Activated naive CD4-positive, alpha-beta T cell treated with anti-CD3 and anti-CD28 coated beads for 36 hours (primary cell): ENCODE measurements at regions of chr10 and their contacts with region 1.

Region 1: GRCh38 chr10:129030996-129031843 is 435.8 kb upstream of the MGMT start:
- DNase-seq: peak; percentile 69
- H3K4me3 Mint-ChIP-seq: peak overlapping the region; percentile 36
- H3K27ac Mint-ChIP-seq: no peak overlapping the region
- H3K4me1 Mint-ChIP-seq: peaks cover 35% of the 10 kb centered on the region
- H3K27me3 Mint-ChIP-seq: peaks cover 2% of the 10 kb centered on the region

Region 2: GRCh38 chr10:128624656-128625530 is 406.3 kb before region 1 on chr10:
- CTCF ChIA-PET with region 1: no interaction called
- intact Hi-C with region 1: no loop called
- DNase-seq: no peak
- H3K4me3 Mint-ChIP-seq: no peak overlapping the region
- H3K27ac Mint-ChIP-seq: no peak overlapping the region
- H3K4me1 Mint-ChIP-seq: no peaks in the 10 kb centered on the region
- H3K27me3 Mint-ChIP-seq: peaks cover 5% of the 10 kb centered on the region

Region 3: DNA sequence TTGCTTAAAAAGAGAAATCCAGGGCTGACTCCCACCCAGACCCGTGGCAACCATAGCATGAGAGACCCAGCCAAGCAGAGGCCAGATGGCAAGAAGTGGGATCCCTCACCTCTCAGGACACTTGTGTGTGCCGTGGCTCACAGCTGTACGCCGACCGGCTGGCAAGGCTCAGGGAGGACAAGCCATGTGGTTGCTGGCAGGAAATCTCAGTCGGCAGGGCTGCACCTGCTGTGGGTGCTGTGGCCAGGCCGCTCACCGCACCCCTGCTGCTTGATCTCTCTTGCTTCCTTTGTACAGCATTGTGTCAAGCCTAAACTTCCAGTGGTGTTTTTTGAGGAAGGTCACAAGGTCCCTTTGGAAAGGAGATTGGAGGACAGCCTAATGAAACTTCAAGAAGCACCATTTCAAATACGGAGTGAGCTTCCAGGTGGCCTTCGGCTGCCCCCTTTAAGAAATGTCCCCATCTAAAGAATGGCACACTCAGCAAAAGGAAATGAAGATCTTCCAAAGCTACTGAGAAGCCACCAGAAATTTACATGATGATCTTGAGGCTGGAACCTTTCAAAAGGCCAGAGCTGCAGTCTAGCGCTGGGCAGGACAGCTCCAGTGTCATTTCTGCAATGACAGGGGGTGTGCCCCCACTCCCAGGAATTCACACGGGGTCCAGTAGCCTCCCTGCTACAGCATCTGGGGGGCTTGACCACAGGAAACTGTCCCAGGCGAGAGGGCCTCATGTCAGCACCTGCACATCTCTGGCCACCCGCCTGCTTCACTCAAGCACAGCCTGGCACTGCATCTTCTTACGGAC is 26.8 kb after region 1 on chr10:
- CTCF ChIA-PET with region 1: interaction called, 4 read pairs
- intact Hi-C with region 1: loop called (anchors 2 kb)
- DNase-seq: peak; percentile 70
- H3K4me3 Mint-ChIP-seq: no peak overlapping the region
- H3K27ac Mint-ChIP-seq: no peak overlapping the region
- H3K4me1 Mint-ChIP-seq: peaks cover 35% of the 10 kb centered on the region
- H3K27me3 Mint-ChIP-seq: no peaks in the 10 kb centered on the region

Region 4: GRCh38 chr10:129140921-129141885 is 110.0 kb after region 1 on chr10:
- CTCF ChIA-PET with region 1: no interaction called
- intact Hi-C with region 1: loop called (anchors 5 kb)
- DNase-seq: no peak
- H3K4me3 Mint-ChIP-seq: no peak overlapping the region
- H3K27ac Mint-ChIP-seq: no peak overlapping the region
- H3K4me1 Mint-ChIP-seq: peaks cover 17% of the 10 kb centered on the region
- H3K27me3 Mint-ChIP-seq: peaks cover 4% of the 10 kb centered on the region

Region 5: GRCh38 chr10:129258283-129258923 is 227.2 kb after region 1 on chr10:
- CTCF ChIA-PET with region 1: no interaction called
- intact Hi-C with region 1: no loop called
- DNase-seq: no peak
- H3K4me3 Mint-ChIP-seq: no peak overlapping the region
- H3K27ac Mint-ChIP-seq: no peak overlapping the region
- H3K4me1 Mint-ChIP-seq: no peaks in the 10 kb centered on the region
- H3K27me3 Mint-ChIP-seq: peaks cover 3% of the 10 kb centered on the region

Region 6: GRCh38 chr10:129332476-129332875 is 301.3 kb after region 1 on chr10:
- CTCF ChIA-PET with region 1: interaction called, 53 read pairs
- intact Hi-C with region 1: loop called (anchors 1 kb)
- DNase-seq: peak; percentile 44
- H3K4me3 Mint-ChIP-seq: no peak overlapping the region
- H3K27ac Mint-ChIP-seq: no peak overlapping the region
- H3K4me1 Mint-ChIP-seq: peaks cover 8% of the 10 kb centered on the region
- H3K27me3 Mint-ChIP-seq: no peaks in the 10 kb centered on the region

Region 7: DNA sequence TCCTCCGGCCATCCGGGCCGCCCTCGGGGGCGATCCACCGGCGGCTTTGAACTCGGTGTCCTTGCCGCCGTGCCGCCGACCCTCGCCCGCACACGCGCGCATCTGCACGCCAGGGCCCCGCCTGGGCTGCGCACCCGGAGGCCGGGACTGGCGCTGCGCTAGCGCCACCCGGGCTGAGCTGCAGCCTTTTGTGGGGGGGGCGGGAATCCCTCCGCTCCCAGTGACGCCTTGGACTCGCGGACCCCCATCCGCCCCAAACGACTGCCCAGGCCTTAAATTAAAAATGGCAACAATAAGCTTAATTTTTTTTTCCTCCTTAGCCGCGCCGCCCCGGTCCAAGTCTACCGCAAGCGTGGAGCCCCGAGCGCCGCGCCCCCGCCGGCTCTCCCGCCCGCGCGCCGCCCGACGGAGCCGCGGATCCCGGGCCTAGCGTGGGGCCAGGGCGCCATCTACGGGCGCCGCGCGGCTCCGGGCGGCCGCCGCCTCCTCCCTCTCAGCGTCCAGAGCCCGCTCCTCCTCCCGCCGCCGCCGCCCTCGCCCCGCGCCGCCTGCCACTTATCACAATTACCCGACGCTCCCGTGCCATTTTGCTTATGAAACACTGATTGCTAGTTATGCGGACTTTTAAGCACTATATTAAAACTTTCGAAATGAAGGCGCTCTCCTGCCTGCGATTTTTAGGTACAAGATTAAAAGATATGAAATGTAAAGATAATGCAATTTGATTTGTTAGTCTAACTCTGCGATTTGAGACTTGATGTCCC is 940.3 kb after region 1 on chr10:
- CTCF ChIA-PET with region 1: interaction called, 25 read pairs
- intact Hi-C with region 1: loop called (anchors 1 kb)
- DNase-seq: peak; percentile 62
- H3K4me3 Mint-ChIP-seq: peak overlapping the region; percentile 52
- H3K27ac Mint-ChIP-seq: no peak overlapping the region
- H3K4me1 Mint-ChIP-seq: peaks cover 21% of the 10 kb centered on the region
- H3K27me3 Mint-ChIP-seq: peaks cover 66% of the 10 kb centered on the region

Region 8: GRCh38 chr10:130127364-130128061 is 1096.3 kb after region 1 on chr10:
- CTCF ChIA-PET with region 1: no interaction called
- intact Hi-C with region 1: loop called (anchors 1 kb)
- DNase-seq: peak; percentile 73
- H3K4me3 Mint-ChIP-seq: no peak overlapping the region
- H3K27ac Mint-ChIP-seq: no peak overlapping the region
- H3K4me1 Mint-ChIP-seq: peaks cover 5% of the 10 kb centered on the region
- H3K27me3 Mint-ChIP-seq: peaks cover 26% of the 10 kb centered on the region